Activated naive CD4-positive, alpha-beta T cell treated with anti-CD3 and anti-CD28 coated beads for 36 hours (primary cell): ENCODE measurements at regions of chr12 and their contacts with region 1.

Region 1: GRCh38 chr12:44875954-44876553 is at the start of gene NELL2:
- DNase-seq: peak; percentile 82
- H3K4me3 Mint-ChIP-seq: peak within 1 kb of the TSS; percentile 99
- H3K27ac Mint-ChIP-seq: peak within 1 kb of the TSS; percentile 91
- H3K4me1 Mint-ChIP-seq: peaks cover 23% of the 10 kb centered on the region
- H3K27me3 Mint-ChIP-seq: peaks cover 6% of the 10 kb centered on the region
- total RNA-seq, gene NELL2: 61.9 to 72.2 TPM

Region 2: DNA sequence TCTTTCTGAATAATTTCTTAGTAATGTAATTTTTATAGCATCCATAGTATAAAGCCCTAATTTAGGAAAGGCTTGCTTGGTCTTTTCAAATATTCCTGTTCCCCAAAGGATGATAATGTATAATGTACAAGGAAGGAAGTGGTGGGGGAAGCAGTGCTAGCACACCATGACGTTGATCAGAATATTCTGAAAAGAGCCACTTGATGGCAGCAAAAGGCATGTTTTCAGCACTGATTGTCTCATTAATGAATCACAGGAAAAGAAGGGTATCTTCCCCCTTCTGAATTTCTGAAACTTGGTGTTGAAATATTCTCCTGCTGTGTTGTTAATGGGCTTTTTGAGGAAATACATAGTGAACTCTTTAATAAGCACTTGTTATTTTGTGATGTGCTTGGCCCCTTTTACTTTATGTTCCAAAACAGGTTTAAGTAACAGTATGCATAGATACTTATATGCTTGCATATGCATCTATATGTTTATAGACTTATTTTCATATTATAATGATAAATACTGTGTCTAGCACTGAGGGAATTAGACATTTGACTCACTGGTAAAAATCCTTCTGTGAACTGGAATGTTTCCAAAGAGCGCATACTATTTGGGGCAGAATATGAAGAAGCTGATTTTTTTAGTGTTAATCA is 918.2 kb before region 1 on chr12:
- CTCF ChIA-PET with region 1: no interaction called
- intact Hi-C with region 1: loop called (anchors 2 kb)
- DNase-seq: peak; percentile 54
- H3K4me3 Mint-ChIP-seq: no peak overlapping the region
- H3K27ac Mint-ChIP-seq: no peak overlapping the region
- H3K4me1 Mint-ChIP-seq: peaks cover 2% of the 10 kb centered on the region
- H3K27me3 Mint-ChIP-seq: no peaks in the 10 kb centered on the region

Region 3: GRCh38 chr12:44317651-44318126 is 558.4 kb before region 1 on chr12:
- CTCF ChIA-PET with region 1: no interaction called
- intact Hi-C with region 1: loop called (anchors 2 kb)
- DNase-seq: no peak
- H3K4me3 Mint-ChIP-seq: no peak overlapping the region
- H3K27ac Mint-ChIP-seq: no peak overlapping the region
- H3K4me1 Mint-ChIP-seq: no peaks in the 10 kb centered on the region
- H3K27me3 Mint-ChIP-seq: no peaks in the 10 kb centered on the region

Region 4: GRCh38 chr12:44774815-44775411 is 101.1 kb before region 1 on chr12:
- CTCF ChIA-PET with region 1: interaction called, 81 read pairs
- intact Hi-C with region 1: loop called (anchors 1 kb)
- DNase-seq: peak; percentile 75
- H3K4me3 Mint-ChIP-seq: no peak overlapping the region
- H3K27ac Mint-ChIP-seq: no peak overlapping the region
- H3K4me1 Mint-ChIP-seq: peaks cover 8% of the 10 kb centered on the region
- H3K27me3 Mint-ChIP-seq: no peaks in the 10 kb centered on the region

Region 5: GRCh38 chr12:44812062-44812461 is 64.0 kb before region 1 on chr12:
- CTCF ChIA-PET with region 1: interaction called, 128 read pairs
- intact Hi-C with region 1: loop called (anchors 1 kb)
- DNase-seq: peak; percentile 67
- H3K4me3 Mint-ChIP-seq: no peak overlapping the region
- H3K27ac Mint-ChIP-seq: peak overlapping the region; percentile 71
- H3K4me1 Mint-ChIP-seq: peaks cover 42% of the 10 kb centered on the region
- H3K27me3 Mint-ChIP-seq: no peaks in the 10 kb centered on the region

Region 6: GRCh38 chr12:44904321-44904720 is 28.3 kb after region 1 on chr12:
- CTCF ChIA-PET with region 1: no interaction called
- intact Hi-C with region 1: no loop called
- DNase-seq: no peak
- H3K4me3 Mint-ChIP-seq: no peak overlapping the region
- H3K27ac Mint-ChIP-seq: no peak overlapping the region
- H3K4me1 Mint-ChIP-seq: no peaks in the 10 kb centered on the region
- H3K27me3 Mint-ChIP-seq: no peaks in the 10 kb centered on the region